Heart left ventricle (tissue), 16 donors: ENCODE measurements at regions of chr1 and their contacts with region 1.

Region 1: GRCh38 chr1:92310185-92310597 is 11.3 kb downstream of the RPAP2 start:
- DNase-seq: no peak
- ATAC-seq: peak in 1 of 4 donors; percentile 49
- H3K4me3 ChIP-seq: no peak overlapping the region
- H3K27ac ChIP-seq: no peak overlapping the region
- H3K4me1 ChIP-seq: no peaks in the 10 kb centered on the region
- H3K27me3 ChIP-seq: no peaks in the 10 kb centered on the region
- CTCF ChIP-seq: peak; percentile 37 to 73 (median 54)
- POLR2A ChIP-seq: no peak

Region 2: GRCh38 chr1:92240034-92240433 is 70.2 kb before region 1 on chr1:
- intact Hi-C with region 1: no loop called
- DNase-seq: no peak
- ATAC-seq: no peak
- H3K4me3 ChIP-seq: no peak overlapping the region
- H3K27ac ChIP-seq: no peak overlapping the region
- H3K4me1 ChIP-seq: peaks cover 0 to 3% (median 0%) of the 10 kb centered on the region in 12 donors
- H3K27me3 ChIP-seq: no peaks in the 10 kb centered on the region
- CTCF ChIP-seq: no peak
- POLR2A ChIP-seq: no peak

Region 3: GRCh38 chr1:92343061-92343460 is 32.9 kb after region 1 on chr1:
- intact Hi-C with region 1: no loop called
- DNase-seq: no peak
- ATAC-seq: no peak
- H3K4me3 ChIP-seq: no peak overlapping the region
- H3K27ac ChIP-seq: no peak overlapping the region
- H3K4me1 ChIP-seq: no peaks in the 10 kb centered on the region
- H3K27me3 ChIP-seq: no peaks in the 10 kb centered on the region
- CTCF ChIP-seq: no peak
- POLR2A ChIP-seq: no peak

Region 4: GRCh38 chr1:92601044-92601443 is 290.9 kb after region 1 on chr1:
- intact Hi-C with region 1: loop called in 3 of 10 experiments (anchors 10 kb)
- DNase-seq: no peak
- ATAC-seq: no peak
- H3K4me3 ChIP-seq: no peak overlapping the region
- H3K27ac ChIP-seq: no peak overlapping the region
- H3K4me1 ChIP-seq: no peaks in the 10 kb centered on the region
- H3K27me3 ChIP-seq: no peaks in the 10 kb centered on the region
- CTCF ChIP-seq: no peak
- POLR2A ChIP-seq: no peak

Region 5: DNA sequence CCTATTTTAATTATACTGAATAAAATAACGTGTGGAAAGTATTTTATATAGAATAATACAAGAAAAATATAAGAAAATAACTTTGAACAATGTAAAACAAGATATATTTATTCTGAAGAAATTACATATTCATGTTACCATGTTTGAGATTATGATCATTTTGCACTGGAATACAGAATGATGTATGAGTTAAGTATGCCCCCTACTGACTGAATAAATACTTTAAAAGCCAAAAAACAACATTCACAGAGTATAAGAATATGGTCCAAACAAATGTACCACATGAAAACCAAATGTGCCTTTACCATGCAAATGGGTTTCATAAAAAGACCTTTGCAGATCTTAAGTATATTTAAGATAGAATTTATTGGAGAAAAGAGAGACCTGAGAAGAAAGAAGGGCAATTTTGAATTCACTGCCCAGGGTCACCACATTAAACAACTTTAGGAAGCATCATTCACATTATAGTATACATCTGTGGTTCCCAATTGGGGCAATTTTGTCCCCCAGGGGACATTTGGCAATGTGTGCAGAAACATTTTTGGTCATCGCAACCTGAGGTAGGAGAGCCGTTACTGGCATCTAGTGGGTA is 313.1 kb after region 1 on chr1:
- intact Hi-C with region 1: loop called in 6 of 10 experiments (anchors 5 to 10 kb)
- DNase-seq: no peak
- ATAC-seq: no peak
- H3K4me3 ChIP-seq: no peak overlapping the region
- H3K27ac ChIP-seq: no peak overlapping the region
- H3K4me1 ChIP-seq: no peaks in the 10 kb centered on the region
- H3K27me3 ChIP-seq: no peaks in the 10 kb centered on the region
- CTCF ChIP-seq: peak; percentile 5 to 53 (median 34)
- POLR2A ChIP-seq: no peak